ENCODE measurements at regions of chr5 and their contacts with region 1.

Region 1: GRCh38 chr5:67149951-67150523 is 46.6 kb downstream of the CD180 start:
- DNase-seq: no peak
- H3K4me3 ChIP-seq: no peak overlapping the region
- H3K27ac ChIP-seq: no peak overlapping the region
- H3K27me3 ChIP-seq: no peaks in the 10 kb centered on the region
- CTCF ChIP-seq: peak; percentile 85

Region 2: DNA sequence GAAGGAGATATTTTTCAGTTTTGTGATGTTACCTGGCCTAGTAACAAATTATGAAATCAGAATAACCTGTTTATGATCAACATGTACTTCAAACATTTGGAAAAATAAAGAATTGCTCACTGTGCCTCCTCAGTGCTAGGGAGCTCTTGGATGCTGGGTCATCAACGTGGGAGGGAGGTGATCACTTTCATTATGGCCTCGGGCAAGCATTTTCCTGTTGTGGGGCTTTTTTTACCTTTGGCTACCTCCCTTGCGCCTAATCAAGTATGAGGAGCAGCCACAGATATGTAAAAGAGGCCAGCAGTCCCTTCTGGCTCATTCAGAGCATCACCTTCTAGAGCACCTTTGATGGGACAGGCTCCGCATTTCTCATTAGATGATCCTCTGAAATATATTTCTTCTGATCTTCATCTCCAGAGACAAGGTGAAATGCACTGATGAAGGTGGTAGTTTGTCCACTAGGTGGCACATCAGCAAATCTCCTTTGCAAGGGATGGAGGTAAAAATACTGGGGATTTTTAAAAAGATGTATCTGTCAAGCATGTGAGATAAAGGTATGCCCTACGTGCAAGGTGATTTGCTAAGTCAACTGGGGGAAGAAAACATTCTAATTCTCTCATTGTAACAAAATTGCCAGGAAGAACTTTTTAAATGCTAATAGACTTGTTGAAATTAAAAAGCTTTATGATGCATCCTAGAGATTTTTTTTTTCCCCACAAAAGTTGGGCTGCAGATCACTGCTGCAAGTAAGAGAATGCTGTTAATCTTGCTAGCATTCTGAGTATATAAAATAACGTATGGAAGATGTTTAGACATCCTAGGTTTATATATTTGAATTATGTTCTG is 335.7 kb before region 1 on chr5:
- CTCF ChIA-PET with region 1: interaction called, 210 read pairs
- POLR2A ChIA-PET with region 1: no interaction called
- DNase-seq: no peak
- H3K4me3 ChIP-seq: no peak overlapping the region
- H3K27ac ChIP-seq: no peak overlapping the region
- H3K27me3 ChIP-seq: peaks cover 23% of the 10 kb centered on the region
- CTCF ChIP-seq: peak; percentile 80

Region 3: DNA sequence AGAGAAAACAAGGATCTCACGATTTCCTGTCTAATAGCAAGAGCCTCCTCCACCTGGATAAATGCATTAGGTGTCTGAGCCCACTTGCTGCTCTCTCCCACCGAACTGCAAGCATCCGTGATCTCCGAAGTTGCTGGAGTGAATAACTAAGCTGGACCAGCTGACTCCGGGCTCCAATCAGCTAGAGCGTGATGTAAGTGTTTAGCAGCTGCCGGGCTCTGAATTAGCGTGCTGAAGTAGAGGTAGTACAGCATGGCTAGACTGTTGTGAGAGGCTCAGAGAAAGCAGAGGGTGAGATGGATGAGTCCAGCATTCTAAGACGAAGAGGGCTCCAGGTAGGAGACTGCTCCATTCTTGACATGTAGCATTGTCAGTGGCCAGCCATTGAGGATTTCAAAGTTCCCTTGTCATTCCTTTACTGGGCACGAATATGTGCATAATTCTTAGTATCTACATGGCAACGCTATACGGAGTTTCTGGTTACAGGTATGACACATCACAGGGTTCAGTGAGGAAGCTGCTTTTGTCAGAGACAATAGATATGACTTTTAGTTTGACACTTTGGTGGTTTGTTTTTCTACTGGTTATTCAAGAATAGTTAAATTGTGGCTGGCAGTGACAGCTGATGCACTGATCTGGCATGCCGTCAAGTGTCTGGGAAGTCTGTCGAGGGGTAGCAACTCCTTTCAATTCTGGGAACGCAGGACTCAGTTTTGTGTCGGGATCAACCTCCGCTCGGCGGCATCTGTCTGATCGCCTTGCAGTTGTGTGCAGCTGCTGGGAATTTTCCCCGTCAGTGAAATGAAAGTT is 321.3 kb before region 1 on chr5:
- CTCF ChIA-PET with region 1: interaction called, 32 read pairs
- POLR2A ChIA-PET with region 1: no interaction called
- DNase-seq: no peak
- H3K4me3 ChIP-seq: peak overlapping the region; percentile 66
- H3K27ac ChIP-seq: peak overlapping the region; percentile 43
- H3K27me3 ChIP-seq: peaks cover 15% of the 10 kb centered on the region
- CTCF ChIP-seq: no peak

Region 4: GRCh38 chr5:66875315-66875714 is 274.7 kb before region 1 on chr5:
- CTCF ChIA-PET with region 1: interaction called, 16 read pairs
- POLR2A ChIA-PET with region 1: no interaction called
- DNase-seq: no peak
- H3K4me3 ChIP-seq: no peak overlapping the region
- H3K27ac ChIP-seq: no peak overlapping the region
- H3K27me3 ChIP-seq: no peaks in the 10 kb centered on the region
- CTCF ChIP-seq: no peak

Region 5: DNA sequence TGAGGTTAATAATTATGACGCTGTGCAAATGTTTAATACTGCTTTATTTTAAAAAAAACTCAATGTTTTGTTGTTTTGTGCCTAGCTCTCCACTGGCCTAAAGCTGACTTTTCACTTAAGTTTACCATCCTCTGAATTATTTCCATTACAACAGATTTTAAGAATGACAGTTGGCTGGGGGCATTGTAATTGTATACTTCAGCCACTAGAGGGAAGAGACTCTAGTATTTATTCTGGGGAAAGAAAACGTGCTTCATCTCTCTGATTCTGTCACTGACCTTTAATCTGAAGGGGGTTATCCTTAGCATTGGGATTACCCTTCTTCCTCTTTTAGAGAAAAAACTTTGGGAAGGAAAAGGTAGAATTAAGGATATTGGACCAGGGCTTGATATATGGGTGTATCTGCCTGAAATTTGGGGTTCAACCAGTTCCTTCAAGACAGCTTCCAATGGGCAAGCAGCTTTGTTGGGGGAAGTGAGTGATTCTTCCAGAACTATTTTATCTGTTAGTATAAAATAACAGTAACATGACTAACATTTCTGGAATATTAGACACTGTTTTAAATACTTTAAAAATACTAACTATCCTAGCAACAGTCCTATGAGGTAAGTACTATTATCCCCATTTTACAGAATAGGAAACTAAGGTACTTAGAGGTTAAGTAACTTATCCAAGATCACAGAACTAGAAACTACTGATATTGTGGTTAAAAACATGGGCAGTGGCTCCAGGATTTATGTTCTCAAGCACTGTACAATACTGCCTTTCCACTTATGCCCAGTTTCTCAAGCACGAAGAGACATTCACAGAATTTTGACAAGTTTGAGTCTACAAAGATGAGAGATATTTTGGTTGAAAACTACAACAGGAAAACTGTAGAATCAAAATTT is 161.8 kb before region 1 on chr5:
- CTCF ChIA-PET with region 1: interaction called, 111 read pairs
- POLR2A ChIA-PET with region 1: no interaction called
- DNase-seq: no peak
- H3K4me3 ChIP-seq: no peak overlapping the region
- H3K27ac ChIP-seq: no peak overlapping the region
- H3K27me3 ChIP-seq: no peaks in the 10 kb centered on the region
- CTCF ChIP-seq: peak; percentile 84

Region 6: DNA sequence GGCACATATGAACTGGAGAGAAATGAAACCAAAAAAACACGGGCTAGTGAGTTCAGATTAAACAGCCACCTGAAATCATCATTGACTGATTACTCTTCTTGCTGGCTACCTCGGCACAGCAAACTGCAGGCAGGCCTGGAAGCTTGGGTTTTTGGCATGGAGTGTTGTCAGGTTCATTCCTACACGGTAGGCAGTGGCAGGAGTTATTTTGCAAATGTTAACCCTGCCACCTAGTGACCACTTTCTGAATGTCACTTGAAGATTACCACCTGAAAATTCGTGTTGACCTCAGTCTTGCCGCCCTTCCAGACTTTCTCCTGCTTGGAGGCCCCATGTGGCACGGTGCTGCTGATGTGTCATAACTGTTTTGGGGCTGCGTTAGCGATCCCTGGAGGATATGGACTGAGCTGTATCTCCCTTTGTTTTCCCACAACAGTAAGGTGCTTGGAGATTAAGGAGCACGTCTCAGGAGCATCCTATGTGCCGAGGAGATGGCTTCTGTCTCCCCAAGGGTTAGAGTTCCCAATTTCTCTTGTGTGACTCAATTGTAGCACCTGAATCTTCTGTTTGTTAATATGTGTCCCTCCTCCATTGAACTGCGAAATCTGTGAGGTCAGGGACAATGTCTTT is 59.2 kb after region 1 on chr5:
- CTCF ChIA-PET with region 1: interaction called, 33 read pairs
- POLR2A ChIA-PET with region 1: no interaction called
- DNase-seq: peak; percentile 37
- H3K4me3 ChIP-seq: no peak overlapping the region
- H3K27ac ChIP-seq: no peak overlapping the region
- H3K27me3 ChIP-seq: peaks cover 2% of the 10 kb centered on the region
- CTCF ChIP-seq: peak; percentile 72

Measured in AG04450 (cell line).